ENCODE measurements at regions of chr11 and their contacts with region 1.

Region 1: GRCh38 chr11:59776210-59777066 is 21.3 kb downstream of the STX3 start:
- DNase-seq: peak; percentile 57 to 97
- H3K4me3 ChIP-seq: no peak overlapping the region
- H3K27ac ChIP-seq: peak overlapping the region; percentile 28
- H3K4me1 ChIP-seq: peaks cover 48% of the 10 kb centered on the region
- H3K27me3 ChIP-seq: no peaks in the 10 kb centered on the region
- CTCF ChIP-seq: no peak

Region 2: DNA sequence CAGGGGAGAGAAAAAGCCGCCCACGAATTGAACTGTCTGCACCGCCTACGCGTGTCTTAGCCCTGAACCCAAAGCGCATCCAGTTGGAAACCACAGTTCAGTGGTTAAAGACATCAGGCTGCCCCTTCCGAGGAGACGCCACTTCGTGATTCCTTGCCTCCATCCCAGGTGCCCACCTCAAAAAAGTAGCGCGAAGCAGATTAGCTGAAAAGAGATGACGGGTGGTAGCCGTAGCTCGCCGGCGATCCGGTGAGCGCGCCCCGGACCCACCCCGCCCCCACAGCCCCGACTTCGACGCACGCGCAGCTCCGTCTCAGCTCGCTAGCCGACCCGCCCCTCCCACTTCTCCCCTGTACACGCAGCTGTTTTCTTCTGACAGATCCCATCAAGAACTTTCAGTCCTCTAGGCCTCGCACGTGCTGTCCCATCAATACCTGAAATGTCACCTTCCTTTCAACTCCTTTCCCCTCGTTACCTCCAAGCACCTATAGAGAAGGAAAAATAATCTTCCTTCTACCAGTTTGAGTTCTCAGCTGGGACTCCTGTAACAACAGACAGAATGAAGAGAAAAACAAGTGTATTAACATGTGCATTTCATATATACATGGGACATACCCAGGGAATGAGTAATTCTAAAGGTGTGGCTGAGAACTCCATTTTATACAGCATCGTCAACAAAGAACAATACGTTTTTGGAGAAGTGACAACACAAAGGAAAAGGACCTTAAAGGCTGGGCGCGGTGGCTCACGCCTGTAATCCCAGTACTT is 215.6 kb before region 1 on chr11:
- CTCF ChIA-PET with region 1: no interaction called
- POLR2A ChIA-PET with region 1: no interaction called
- intact Hi-C with region 1: loop called (anchors 5 kb)
- DNase-seq: peak; percentile 81 to 96
- H3K4me3 ChIP-seq: peak overlapping the region; percentile 79
- H3K27ac ChIP-seq: peak overlapping the region; percentile 84
- H3K4me1 ChIP-seq: peaks cover 22% of the 10 kb centered on the region
- H3K27me3 ChIP-seq: no peaks in the 10 kb centered on the region
- CTCF ChIP-seq: no peak

Region 3: GRCh38 chr11:59698506-59698905 is 77.9 kb before region 1 on chr11:
- CTCF ChIA-PET with region 1: interaction called, 12 read pairs
- POLR2A ChIA-PET with region 1: no interaction called
- intact Hi-C with region 1: no loop called
- DNase-seq: no peak
- H3K4me3 ChIP-seq: no peak overlapping the region
- H3K27ac ChIP-seq: no peak overlapping the region
- H3K4me1 ChIP-seq: no peaks in the 10 kb centered on the region
- H3K27me3 ChIP-seq: peaks cover 5% of the 10 kb centered on the region; the same call in 1 of the 2 replicates
- CTCF ChIP-seq: no peak

Region 4: GRCh38 chr11:59787816-59788215 is 11.4 kb after region 1 on chr11:
- CTCF ChIA-PET with region 1: interaction called, 3 read pairs
- POLR2A ChIA-PET with region 1: interaction called, 7 read pairs
- intact Hi-C with region 1: loop called (anchors 1 kb)
- DNase-seq: no peak
- H3K4me3 ChIP-seq: peak overlapping the region; percentile 21; the same call in 1 of the 2 replicates
- H3K27ac ChIP-seq: peak overlapping the region; percentile 79
- H3K4me1 ChIP-seq: peaks cover 37% of the 10 kb centered on the region
- H3K27me3 ChIP-seq: no peaks in the 10 kb centered on the region
- CTCF ChIP-seq: no peak

Measured in PC-9 (cell line).